Gastrocnemius medialis (tissue), 4 donors: ENCODE measurements at regions of chr2 and their contacts with region 1.

Region 1: GRCh38 chr2:7007846-7008741 is 90.9 kb downstream of the RNF144A start:
- DNase-seq: peak; percentile 91 to 93
- ATAC-seq: peak; percentile 83 to 85
- H3K4me3 ChIP-seq: peak overlapping the region; percentile 2 to 30 (median 6)
- H3K27ac ChIP-seq: peak overlapping the region; percentile 69 to 83 (median 78)
- H3K4me1 ChIP-seq: peaks cover 47 to 69% of the 10 kb centered on the region in 2 donors
- H3K27me3 ChIP-seq: no peaks in the 10 kb centered on the region
- CTCF ChIP-seq: peak; percentile 24 to 57 (median 39)
- POLR2A ChIP-seq: peak in 1 of 2 donors; percentile 10

Region 2: GRCh38 chr2:6917071-6917760 is 90.9 kb before region 1 on chr2 and contains the start of gene RNF144A:
- in situ Hi-C with region 1: no loop called
- intact Hi-C with region 1: loop called (anchors 2 kb)
- DNase-seq: no peak
- ATAC-seq: peak; percentile 90 to 91
- H3K4me3 ChIP-seq: peak within 1 kb of the TSS; percentile 62 to 82 (median 70)
- H3K27ac ChIP-seq: peak within 1 kb of the TSS; percentile 54 to 76 (median 65)
- H3K4me1 ChIP-seq: peaks cover 6 to 10% of the 10 kb centered on the region in 2 donors
- H3K27me3 ChIP-seq: no peaks in the 10 kb centered on the region
- CTCF ChIP-seq: peak; percentile 40 to 67 (median 65)
- POLR2A ChIP-seq: peak; percentile 63 to 69
- total RNA-seq, gene RNF144A: 4.9 to 16.2 (median 10.2) TPM

Region 3: DNA sequence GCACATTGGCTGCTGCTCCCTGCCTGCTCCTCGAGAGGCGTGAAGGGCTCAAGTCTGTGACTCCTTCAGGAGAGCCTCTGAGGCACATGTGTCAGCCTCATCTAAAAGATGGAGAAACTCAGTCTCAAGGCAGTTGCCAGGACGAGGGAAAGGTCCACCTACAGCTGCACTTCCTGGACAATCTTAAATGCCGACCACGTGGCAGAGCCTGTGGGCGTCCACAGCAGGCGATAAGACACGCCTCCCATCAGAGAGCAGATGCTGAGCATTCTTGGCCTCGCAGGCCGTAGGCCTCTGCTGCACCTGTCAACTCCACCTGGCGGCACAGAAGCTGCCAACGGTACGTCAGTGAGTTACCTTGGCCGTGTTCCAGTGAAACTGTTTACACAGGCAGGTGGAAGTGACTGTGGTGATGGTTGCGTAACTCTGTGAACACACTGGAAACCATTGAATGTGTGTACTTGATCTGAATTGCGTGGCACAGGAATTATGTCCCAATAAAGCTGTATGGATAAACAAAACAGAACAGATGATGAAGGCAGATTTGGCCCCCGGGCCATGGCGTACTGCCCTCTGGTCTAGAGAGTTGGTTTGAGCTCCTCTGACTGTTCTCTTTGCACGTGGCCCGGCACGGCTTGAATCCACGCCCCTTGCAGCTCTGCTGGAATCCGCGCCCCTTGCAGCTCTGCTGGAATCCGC is 23.6 kb after region 1 on chr2:
- in situ Hi-C with region 1: no loop called
- intact Hi-C with region 1: loop called (anchors 1 kb)
- DNase-seq: peak; percentile 58 to 72
- ATAC-seq: peak; percentile 69 to 73
- H3K4me3 ChIP-seq: no peak overlapping the region
- H3K27ac ChIP-seq: peak overlapping the region; percentile 42 to 72 (median 52)
- H3K4me1 ChIP-seq: peaks cover 5 to 8% of the 10 kb centered on the region in 2 donors
- H3K27me3 ChIP-seq: no peaks in the 10 kb centered on the region
- CTCF ChIP-seq: no peak
- POLR2A ChIP-seq: no peak